GM18951 (cell line): ENCODE measurements at regions of chr3 and their contacts with region 1.

Region 1: DNA sequence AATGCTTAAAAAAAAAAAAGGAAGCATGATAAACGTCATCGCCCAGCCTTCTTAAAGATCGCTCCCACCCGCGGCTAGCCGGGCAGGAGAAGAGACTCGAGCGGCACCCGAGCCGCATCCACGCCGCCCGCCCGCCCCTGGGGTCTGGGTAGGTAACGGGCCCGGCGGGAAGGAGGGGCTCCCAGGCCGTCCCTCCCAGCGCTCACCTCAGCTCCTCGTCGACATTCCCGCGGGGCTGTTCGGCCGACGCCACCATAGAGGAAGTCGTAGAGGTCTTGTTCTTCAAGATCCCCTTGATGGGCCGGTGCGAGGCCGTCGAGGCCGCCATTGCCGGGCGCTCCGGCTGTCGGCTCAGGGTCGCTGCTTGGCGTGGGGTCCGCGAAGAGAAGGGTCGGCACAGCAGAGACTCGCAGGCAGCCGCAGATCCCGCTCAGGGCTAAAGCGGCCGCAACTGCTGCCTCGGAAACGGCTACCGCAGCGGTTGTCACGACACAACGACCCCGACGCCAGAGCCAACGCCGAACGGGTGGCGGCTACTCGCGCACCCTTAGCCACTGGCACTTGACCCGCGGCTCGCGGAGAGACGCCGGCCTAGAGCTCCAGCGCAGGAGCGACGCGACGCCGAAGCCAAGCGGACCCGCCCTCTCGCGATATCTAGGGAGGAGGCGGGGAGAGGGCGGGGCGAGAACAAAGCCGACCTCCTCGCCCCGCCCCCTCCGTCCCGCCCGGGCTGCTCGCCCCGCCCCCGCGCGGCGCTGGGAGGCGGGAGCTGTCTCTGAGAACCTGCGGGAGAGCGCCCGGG is at the start of gene PPP1R2:
- POLR2A ChIP-seq: peak; percentile 98

Region 2: GRCh38 chr3:195147649-195148095 is 395.2 kb before region 1 on chr3:
- in situ Hi-C with region 1: loop called (anchors 25 kb)
- POLR2A ChIP-seq: peak; percentile 45

Region 3: GRCh38 chr3:195384952-195385351 is 157.9 kb before region 1 on chr3:
- in situ Hi-C with region 1: no loop called
- POLR2A ChIP-seq: no peak

Region 4: GRCh38 chr3:195755791-195756676 is 213.1 kb after region 1 on chr3:
- in situ Hi-C with region 1: no loop called
- POLR2A ChIP-seq: no peak